ENCODE measurements at regions of chr13 and their contacts with region 1.

Region 1: DNA sequence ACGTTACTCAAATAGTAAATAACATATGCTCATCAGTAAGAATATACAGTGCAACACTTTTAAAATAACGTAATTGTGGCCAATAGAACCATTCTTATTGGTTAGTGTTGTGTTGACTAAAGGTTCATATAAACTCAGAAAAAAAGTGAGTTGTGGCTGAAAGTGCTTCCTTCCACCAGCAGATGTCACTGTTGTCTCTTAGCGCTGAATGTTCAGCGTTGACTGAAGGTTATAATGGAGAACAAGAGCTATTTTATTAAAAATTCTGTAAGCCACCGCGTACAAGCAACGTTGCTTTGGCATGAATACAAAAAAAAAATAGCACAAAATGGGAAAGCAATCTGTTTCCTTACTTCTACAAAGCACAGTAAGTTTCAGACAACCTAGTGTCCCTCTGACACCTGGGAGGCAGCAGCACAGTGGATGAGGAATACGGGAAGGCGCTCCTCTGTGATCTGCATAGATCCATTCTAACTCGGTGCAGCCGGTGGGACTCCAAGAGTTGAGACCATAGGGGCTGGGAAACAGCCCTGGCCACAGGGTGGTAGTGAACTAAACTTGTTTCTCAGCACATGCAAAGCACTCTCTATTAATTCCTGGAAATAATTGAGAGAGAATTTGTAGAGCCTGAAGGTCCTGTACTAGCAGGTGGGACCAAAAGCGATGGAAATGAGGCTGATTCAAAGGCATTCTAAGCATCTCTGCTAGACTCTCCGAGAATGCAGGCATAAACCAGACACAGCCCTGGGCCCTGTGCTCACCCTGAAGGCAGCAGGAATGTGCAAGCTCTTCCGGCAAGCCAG is 24.0 kb upstream of the OXGR1 start:
- DNase-seq: peak in 1 of 2 donors; percentile 67
- H3K4me3 ChIP-seq: no peak overlapping the region
- H3K27ac ChIP-seq: no peak overlapping the region
- H3K4me1 ChIP-seq: no peaks in the 10 kb centered on the region
- H3K27me3 ChIP-seq: no peaks in the 10 kb centered on the region
- CTCF ChIP-seq: peak; percentile 54 to 89 (median 83)

Region 2: GRCh38 chr13:97030705-97031452 is 12.6 kb after region 1 on chr13:
- intact Hi-C with region 1: loop called (anchors 1 kb)
- DNase-seq: no peak
- H3K4me3 ChIP-seq: no peak overlapping the region
- H3K27ac ChIP-seq: no peak overlapping the region
- H3K4me1 ChIP-seq: peaks cover 0 to 3% of the 10 kb centered on the region in 2 donors
- H3K27me3 ChIP-seq: no peaks in the 10 kb centered on the region
- CTCF ChIP-seq: no peak

Region 3: DNA sequence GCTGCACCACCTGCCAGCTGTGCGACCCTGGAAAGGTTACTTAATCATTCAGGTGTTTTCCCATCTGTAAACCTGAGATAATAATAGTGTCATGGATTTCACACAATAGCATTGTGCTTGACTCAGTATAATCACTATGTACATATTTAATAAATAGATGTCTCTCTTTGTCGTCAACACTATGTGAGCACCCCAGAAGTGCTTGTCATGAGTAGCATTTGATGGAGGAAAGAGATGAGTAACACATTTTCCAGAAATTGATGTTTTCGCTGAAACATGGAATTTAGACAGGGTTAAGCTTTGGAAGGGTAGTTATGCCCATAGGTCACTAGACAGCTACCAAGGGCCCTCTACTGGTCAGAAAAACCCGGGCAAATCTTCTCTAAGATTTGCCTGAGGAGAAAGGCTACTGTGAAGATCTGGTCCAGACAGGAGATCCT is 194.4 kb after region 1 on chr13:
- intact Hi-C with region 1: loop called (anchors 5 kb)
- DNase-seq: no peak
- H3K4me3 ChIP-seq: no peak overlapping the region
- H3K27ac ChIP-seq: no peak overlapping the region
- H3K4me1 ChIP-seq: no peaks in the 10 kb centered on the region
- H3K27me3 ChIP-seq: no peaks in the 10 kb centered on the region
- CTCF ChIP-seq: peak in 2 of 3 experiments; percentile 46

Region 4: DNA sequence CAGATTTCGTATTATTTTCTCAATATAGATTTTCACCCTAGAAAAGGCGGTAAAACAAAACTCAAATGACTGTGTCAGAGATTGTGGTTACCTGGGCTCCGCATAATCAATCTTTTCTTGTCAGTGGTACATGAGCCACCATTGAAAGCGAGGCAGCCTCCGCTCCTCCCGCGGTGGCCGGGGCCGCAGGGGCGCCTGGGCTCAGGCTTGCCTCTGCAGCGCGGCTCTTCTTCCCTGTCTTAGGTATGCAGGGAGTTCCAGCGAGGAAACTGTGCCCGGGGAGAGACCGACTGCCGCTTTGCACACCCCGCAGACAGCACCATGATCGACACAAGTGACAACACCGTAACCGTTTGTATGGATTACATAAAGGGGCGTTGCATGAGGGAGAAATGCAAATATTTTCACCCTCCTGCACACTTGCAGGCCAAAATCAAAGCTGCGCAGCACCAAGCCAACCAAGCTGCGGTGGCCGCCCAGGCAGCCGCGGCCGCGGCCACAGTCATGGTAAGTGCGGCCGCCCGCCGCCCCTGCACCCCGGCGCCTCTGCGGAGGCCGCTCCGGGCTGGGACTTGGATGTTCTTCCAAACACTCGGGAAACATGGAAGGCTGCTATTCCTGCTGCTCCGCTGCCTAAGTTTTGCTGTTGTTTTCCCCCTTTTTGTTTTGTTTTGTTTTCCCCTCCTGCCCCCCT is 328.5 kb after region 1 on chr13:
- intact Hi-C with region 1: no loop called
- DNase-seq: no peak
- H3K4me3 ChIP-seq: no peak overlapping the region
- H3K27ac ChIP-seq: no peak overlapping the region
- H3K4me1 ChIP-seq: peaks cover 0 to 6% of the 10 kb centered on the region in 2 donors
- H3K27me3 ChIP-seq: no peaks in the 10 kb centered on the region
- CTCF ChIP-seq: no peak

Region 5: GRCh38 chr13:97359181-97360057 is 341.2 kb after region 1 on chr13:
- intact Hi-C with region 1: loop called (anchors 5 kb)
- DNase-seq: no peak
- H3K4me3 ChIP-seq: no peak overlapping the region
- H3K27ac ChIP-seq: no peak overlapping the region
- H3K4me1 ChIP-seq: peaks cover 0 to 18% of the 10 kb centered on the region in 2 donors
- H3K27me3 ChIP-seq: no peaks in the 10 kb centered on the region
- CTCF ChIP-seq: peak; percentile 70 to 90 (median 85)

Measured in ascending aorta (tissue), 2 donors.